ENCODE measurements at regions of chr9 and their contacts with region 1.

Region 1: GRCh38 chr9:123225374-123225813 is 43.0 kb downstream of the STRBP start:
- DNase-seq: peak; percentile 72
- CTCF ChIP-seq: peak; percentile 77

Region 2: GRCh38 chr9:123081824-123082223 is 143.6 kb before region 1 on chr9:
- in situ Hi-C with region 1: loop called (anchors 10 kb)
- DNase-seq: no peak
- CTCF ChIP-seq: peak; percentile 70